ENCODE measurements at regions of chr4 and their contacts with region 1.

Region 1: DNA sequence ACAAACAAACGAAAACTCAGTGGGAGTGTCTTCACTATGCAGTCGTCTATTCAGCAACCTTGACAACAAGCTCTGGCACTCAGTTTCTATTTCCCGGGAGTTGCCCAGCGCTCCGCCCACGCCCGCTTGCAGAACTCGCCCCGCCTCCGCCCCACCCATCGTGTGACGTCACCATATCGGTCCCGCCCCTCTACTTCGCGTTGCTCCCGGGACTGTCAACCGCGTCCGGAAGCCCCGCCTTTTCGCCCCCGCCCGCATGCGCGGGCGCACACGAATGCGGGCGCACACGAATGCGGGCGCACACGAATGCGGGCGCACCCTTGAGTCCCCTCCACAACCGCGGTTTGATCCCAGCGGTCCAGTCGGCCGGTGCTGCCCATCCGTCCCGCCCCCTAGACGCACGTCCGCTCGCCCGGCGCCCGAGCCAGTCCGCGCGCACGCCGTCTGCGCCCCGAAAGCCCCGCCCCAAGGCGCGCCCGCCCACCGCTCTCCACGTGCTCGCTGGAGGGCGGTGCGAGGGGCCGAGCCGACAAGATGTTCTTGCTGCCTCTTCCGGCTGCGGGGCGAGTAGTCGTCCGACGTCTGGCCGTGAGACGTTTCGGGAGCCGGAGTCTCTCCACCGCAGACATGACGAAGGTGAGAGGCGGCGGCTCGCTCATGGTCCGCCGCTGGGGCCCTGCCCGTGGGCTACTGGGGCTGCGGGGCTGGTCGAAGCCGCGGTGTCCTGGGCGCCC is at the start of gene LAP3:
- DNase-seq: peak; percentile 99
- H3K4me3 ChIP-seq: peak within 1 kb of the TSS; percentile 92 to 96 (median 93)
- H3K27ac ChIP-seq: peak within 1 kb of the TSS; percentile 95 to 99 (median 98)
- H3K4me1 ChIP-seq: peaks cover 0 to 33% (median 28%) of the 10 kb centered on the region in 4 donors
- H3K27me3 ChIP-seq: no peaks in the 10 kb centered on the region
- CTCF ChIP-seq: no peak
- EP300 ChIP-seq: no peak
- POLR2A ChIP-seq: peak; percentile 83 to 89
- total RNA-seq, gene LAP3: 37.1 to 69.9 (median 51.3) TPM

Region 2: DNA sequence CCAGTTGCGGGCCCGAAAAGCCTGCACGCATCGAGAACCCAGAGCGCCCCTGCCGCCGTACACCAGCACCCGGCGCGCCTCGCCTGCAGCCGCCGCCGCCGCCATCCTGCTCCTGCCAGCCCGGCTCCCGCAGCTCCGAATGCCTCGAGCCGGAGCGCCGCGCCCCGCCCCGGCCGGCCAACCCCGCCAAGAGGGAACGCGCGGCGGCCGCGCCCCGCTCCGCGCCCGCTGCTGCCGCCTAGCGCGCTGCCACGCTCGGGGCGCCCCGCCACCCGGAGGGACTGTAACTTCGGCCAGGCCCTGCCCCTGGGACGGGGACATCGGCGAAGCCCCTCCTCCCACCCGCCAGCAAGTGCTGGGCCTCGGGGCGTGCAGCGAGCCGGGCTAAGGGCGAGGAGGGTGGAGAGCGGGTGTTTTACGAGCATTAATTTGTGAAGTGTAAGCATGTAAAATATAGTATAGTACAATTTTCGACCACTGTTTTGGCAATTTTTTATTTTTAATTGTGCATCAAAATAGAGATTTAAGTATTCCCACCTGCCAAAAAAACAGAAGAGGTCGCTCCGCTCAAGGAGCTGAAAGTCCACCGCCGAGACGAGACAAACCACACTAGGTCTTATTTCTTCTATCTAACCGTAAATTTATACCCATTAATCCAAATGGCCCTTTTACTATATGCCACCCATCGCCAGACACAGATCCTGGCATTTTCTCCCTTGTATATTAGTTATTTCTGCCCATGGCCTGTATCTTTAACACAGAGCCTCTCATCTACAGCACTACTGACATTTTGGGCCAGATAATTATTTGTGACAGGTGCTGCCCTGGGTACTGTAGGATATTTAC is 64.9 kb before region 1 on chr4 and contains the start of gene QDPR:
- intact Hi-C with region 1: loop called (anchors 2 kb)
- DNase-seq: peak; percentile 81
- H3K4me3 ChIP-seq: peak within 1 kb of the TSS; percentile 77 to 92 (median 82)
- H3K27ac ChIP-seq: peak within 1 kb of the TSS; percentile 73 to 84 (median 81)
- H3K4me1 ChIP-seq: peaks cover 0 to 23% (median 15%) of the 10 kb centered on the region in 4 donors
- H3K27me3 ChIP-seq: no peaks in the 10 kb centered on the region
- CTCF ChIP-seq: peak in 1 of 4 experiments; percentile 16
- EP300 ChIP-seq: no peak
- POLR2A ChIP-seq: no peak
- total RNA-seq, gene QDPR: 8.7 to 19.7 (median 16.5) TPM

Region 3: DNA sequence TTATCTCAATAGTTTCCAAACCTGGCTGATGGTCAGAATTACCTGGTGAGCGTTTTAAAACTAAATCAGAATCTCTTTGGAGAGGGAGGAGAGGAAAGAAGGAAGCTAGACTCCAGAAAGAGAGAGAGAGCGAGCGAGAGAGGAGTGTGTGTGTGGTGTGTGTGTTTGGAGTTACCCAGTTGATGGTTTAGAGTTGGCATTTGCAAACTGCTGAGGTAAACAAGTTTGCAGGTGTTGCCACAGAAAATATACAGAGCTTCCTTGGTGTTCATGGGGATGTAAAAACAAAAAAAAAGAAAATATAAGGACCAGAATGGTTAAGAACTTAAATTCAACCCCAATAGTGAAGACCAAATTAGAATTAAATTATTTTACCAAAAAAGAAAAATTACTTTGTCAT is 26.6 kb before region 1 on chr4:
- intact Hi-C with region 1: loop called (anchors 1 kb)
- DNase-seq: no peak
- H3K4me3 ChIP-seq: no peak overlapping the region
- H3K27ac ChIP-seq: no peak overlapping the region
- H3K4me1 ChIP-seq: no peaks in the 10 kb centered on the region
- H3K27me3 ChIP-seq: peaks cover 0 to 3% (median 0%) of the 10 kb centered on the region in 3 donors
- CTCF ChIP-seq: no peak
- EP300 ChIP-seq: no peak
- POLR2A ChIP-seq: no peak

Region 4: DNA sequence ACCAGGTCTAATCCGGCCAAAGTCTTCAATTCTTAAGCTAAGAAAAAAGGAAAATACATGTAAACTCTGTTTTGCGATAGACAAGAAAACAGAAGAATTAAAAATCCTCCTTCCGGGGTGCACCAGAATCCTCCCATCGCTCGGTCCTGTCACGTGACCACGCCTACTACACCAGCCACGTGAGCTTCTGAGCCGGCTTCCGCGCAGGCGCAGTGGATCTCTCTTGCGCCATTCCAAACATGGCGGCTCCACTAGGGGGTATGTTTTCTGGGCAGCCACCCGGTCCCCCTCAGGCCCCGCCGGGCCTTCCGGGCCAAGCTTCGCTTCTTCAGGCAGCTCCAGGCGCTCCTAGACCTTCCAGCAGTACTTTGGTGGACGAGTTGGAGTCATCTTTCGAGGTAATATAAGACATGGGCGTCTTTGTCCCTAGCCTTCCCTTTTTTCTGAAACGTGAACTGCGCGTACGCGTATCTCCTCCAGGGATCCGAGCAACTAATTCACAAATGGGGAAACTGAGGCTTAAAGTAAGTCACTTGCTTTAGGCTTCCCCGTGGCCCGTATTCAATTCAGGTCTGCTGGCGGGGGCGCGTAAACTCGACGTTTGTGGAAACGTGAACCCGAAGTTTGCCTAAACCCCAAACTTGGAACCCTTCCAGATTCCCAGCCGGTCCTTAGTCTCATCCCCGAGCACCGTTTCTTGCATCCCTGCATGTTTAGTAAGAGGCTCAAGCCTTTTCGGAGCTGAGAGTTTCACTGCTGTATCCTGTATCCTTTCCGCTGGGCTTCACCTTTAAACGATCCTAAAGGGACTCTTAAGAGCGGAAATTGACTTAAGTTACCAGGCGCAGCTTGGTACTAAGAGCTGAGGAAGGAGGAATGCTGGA is 37.6 kb after region 1 on chr4 and contains the start of gene MED28:
- intact Hi-C with region 1: loop called (anchors 1 kb)
- DNase-seq: peak; percentile 99
- H3K4me3 ChIP-seq: peak within 1 kb of the TSS; percentile 60 to 96 (median 88)
- H3K27ac ChIP-seq: peak within 1 kb of the TSS; percentile 79 to 90 (median 86)
- H3K4me1 ChIP-seq: peaks cover 0 to 49% (median 41%) of the 10 kb centered on the region in 4 donors
- H3K27me3 ChIP-seq: no peaks in the 10 kb centered on the region
- CTCF ChIP-seq: peak in 2 of 4 experiments; percentile 20 to 30
- EP300 ChIP-seq: no peak
- POLR2A ChIP-seq: peak; percentile 94
- total RNA-seq, gene MED28: 17.1 to 24.0 (median 18.7) TPM

Measured in sigmoid colon (tissue), 7 donors.